ENCODE measurements at regions of chr2 and their contacts with region 1.

Region 1: DNA sequence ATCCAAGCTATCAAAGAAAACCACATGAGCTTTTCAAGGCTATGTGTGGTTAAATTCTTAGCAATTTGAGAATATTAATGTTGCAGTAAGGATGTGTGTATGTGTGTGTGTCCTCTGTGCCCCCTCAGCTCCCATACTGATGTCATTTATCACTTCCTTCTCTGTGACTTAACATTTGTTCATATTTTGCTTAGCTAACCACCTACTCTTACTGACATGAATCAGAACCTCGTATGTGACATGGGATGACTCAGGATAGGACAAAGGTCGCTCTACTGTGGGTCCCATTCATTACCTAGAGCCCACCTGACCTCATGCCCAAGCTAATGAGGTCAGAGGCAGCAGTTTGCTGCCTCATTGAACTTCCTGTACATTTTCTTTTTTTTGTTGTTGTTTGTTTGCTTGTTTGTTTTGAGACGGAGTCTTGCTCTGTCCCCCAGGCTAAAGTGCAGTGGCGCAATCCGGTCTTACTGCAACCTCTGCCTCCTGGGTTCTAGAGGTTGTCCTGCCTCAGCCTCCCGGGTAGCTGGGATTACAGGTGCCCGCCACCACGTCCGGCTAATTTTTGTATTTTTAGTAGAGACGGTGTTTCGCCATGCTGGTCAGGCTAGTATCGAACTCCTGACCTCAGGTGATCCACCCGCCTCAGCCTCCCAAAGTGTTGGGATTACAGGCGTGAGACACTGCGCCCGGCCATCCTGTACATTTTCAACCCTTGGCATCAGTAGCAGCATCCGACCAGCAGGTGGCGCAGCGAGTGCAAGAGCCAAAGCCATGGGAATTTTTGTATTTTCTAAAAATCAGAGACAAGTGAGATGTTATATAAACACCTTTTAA is 36.4 kb downstream of the MOGAT1 start:
- DNase-seq: peak; percentile 83
- ATAC-seq: peak; percentile 6; the same call in 2 of the 3 replicates
- H3K4me3 ChIP-seq: peak overlapping the region in 2 of 3 experiments; percentile 28 to 50; a peak in 3 of 6 replicates
- H3K27ac ChIP-seq: peak overlapping the region; percentile 47
- H3K4me1 ChIP-seq: peaks cover 55% of the 10 kb centered on the region
- H3K27me3 ChIP-seq: no peaks in the 10 kb centered on the region
- CTCF ChIP-seq: peak; percentile 94
- EP300 ChIP-seq: peak in 1 of 2 experiments; percentile 56; a peak in 3 of 4 replicates
- POLR2A ChIP-seq: no peak
- RAD21 ChIP-seq: peak; percentile 95

Region 2: GRCh38 chr2:222734703-222735014 is 26.8 kb after region 1 on chr2:
- CTCF ChIA-PET with region 1: no interaction called
- POLR2A ChIA-PET with region 1: interaction called, 16 read pairs
- in situ Hi-C with region 1: no loop called
- intact Hi-C with region 1: loop called (anchors 1 kb)
- DNase-seq: peak; percentile 49
- ATAC-seq: peak; percentile 33
- H3K4me3 ChIP-seq: no peak overlapping the region; a peak in 1 of 6 replicates
- H3K27ac ChIP-seq: peak overlapping the region; percentile 87
- H3K4me1 ChIP-seq: peaks cover 87% of the 10 kb centered on the region
- H3K27me3 ChIP-seq: no peaks in the 10 kb centered on the region
- CTCF ChIP-seq: no peak
- EP300 ChIP-seq: no peak
- POLR2A ChIP-seq: no peak
- RAD21 ChIP-seq: no peak

Region 3: GRCh38 chr2:222776792-222777191 is 68.9 kb after region 1 on chr2:
- CTCF ChIA-PET with region 1: no interaction called
- POLR2A ChIA-PET with region 1: interaction called, 5 read pairs
- in situ Hi-C with region 1: no loop called
- intact Hi-C with region 1: loop called (anchors 2 kb)
- DNase-seq: peak; percentile 62
- ATAC-seq: peak; percentile 92
- H3K4me3 ChIP-seq: no peak overlapping the region; a peak in 1 of 6 replicates
- H3K27ac ChIP-seq: peak overlapping the region; percentile 15
- H3K4me1 ChIP-seq: peaks cover 58% of the 10 kb centered on the region
- H3K27me3 ChIP-seq: no peaks in the 10 kb centered on the region
- CTCF ChIP-seq: 0 out of 2 replicates have a peak, but pooled peaks have one; percentile 13
- EP300 ChIP-seq: no peak
- POLR2A ChIP-seq: no peak
- RAD21 ChIP-seq: no peak

Region 4: GRCh38 chr2:222860740-222861410 is 153.0 kb after region 1 on chr2 and contains the start of gene ACSL3:
- CTCF ChIA-PET with region 1: interaction called, 3 read pairs
- POLR2A ChIA-PET with region 1: interaction called, 43 read pairs
- in situ Hi-C with region 1: loop called (anchors 5 kb)
- intact Hi-C with region 1: loop called (anchors 1 kb)
- DNase-seq: peak; percentile 92
- ATAC-seq: peak; percentile 98
- H3K4me3 ChIP-seq: peak within 1 kb of the TSS; percentile 81 to 99 (median 99)
- H3K27ac ChIP-seq: peak within 1 kb of the TSS; percentile 82
- H3K4me1 ChIP-seq: peaks cover 36% of the 10 kb centered on the region
- H3K27me3 ChIP-seq: no peaks in the 10 kb centered on the region; a peak in 1 of 5 replicates
- CTCF ChIP-seq: peak; percentile 32; the same call in 1 of the 2 replicates
- EP300 ChIP-seq: peak in 1 of 2 experiments; percentile 65
- POLR2A ChIP-seq: peak; percentile 99 to 100
- RAD21 ChIP-seq: peak; percentile 83
- total RNA-seq, gene ACSL3: 168 and 305 TPM in 2 replicates

Region 5: DNA sequence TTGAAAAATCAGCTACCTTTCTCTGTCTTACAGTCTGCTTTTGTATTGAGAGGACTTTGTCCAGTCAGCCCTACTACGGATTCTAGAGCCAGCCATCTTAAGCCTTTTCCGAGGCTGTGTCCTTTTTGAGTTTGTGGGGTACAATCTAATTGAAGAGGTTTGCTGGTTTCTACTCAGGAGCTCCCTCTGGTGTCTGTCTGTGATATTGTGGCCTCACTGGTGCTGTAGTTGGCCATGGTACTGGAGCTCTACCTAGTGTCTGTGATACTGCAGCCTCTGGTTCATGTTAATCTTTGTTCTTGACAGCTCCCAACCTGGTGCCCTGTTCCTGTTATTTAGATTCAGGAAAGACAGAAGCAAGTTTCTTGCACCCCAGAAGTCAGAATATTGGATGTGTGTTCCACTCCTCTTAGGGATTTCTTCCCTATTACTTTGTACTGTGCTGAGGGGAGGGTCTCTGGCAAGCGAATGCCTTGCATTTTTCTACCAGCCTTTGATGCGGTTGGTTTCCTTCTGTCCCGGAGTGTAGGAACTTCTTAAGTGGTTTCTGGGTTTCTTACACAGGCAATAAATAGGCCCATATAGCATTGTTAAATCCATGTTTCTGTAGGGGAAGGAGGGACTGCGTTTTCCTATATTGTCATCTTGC is 231.4 kb after region 1 on chr2:
- CTCF ChIA-PET with region 1: interaction called, 24 read pairs
- POLR2A ChIA-PET with region 1: no interaction called
- in situ Hi-C with region 1: no loop called
- intact Hi-C with region 1: no loop called
- DNase-seq: peak; percentile 79
- ATAC-seq: peak; percentile 89
- H3K4me3 ChIP-seq: no peak overlapping the region
- H3K27ac ChIP-seq: no peak overlapping the region
- H3K4me1 ChIP-seq: no peaks in the 10 kb centered on the region
- H3K27me3 ChIP-seq: no peaks in the 10 kb centered on the region
- CTCF ChIP-seq: peak; percentile 86
- EP300 ChIP-seq: no peak
- POLR2A ChIP-seq: no peak
- RAD21 ChIP-seq: peak; percentile 83

Region 6: GRCh38 chr2:223692191-223692947 is 984.5 kb after region 1 on chr2:
- CTCF ChIA-PET with region 1: no interaction called
- POLR2A ChIA-PET with region 1: no interaction called
- in situ Hi-C with region 1: no loop called
- intact Hi-C with region 1: no loop called
- DNase-seq: peak; percentile 54
- ATAC-seq: peak; percentile 95
- H3K4me3 ChIP-seq: no peak overlapping the region
- H3K27ac ChIP-seq: no peak overlapping the region
- H3K4me1 ChIP-seq: peaks cover 16% of the 10 kb centered on the region; the same call in 1 of the 2 replicates
- H3K27me3 ChIP-seq: peaks cover 0 to 6% of the 10 kb centered on the region in 2 experiments; a peak in 2 of 5 replicates
- CTCF ChIP-seq: peak; percentile 85
- EP300 ChIP-seq: no peak
- POLR2A ChIP-seq: no peak
- RAD21 ChIP-seq: peak; percentile 61; the same call in 1 of the 2 replicates